ENCODE measurements at regions of chr4 and their contacts with region 1.

Region 1: DNA sequence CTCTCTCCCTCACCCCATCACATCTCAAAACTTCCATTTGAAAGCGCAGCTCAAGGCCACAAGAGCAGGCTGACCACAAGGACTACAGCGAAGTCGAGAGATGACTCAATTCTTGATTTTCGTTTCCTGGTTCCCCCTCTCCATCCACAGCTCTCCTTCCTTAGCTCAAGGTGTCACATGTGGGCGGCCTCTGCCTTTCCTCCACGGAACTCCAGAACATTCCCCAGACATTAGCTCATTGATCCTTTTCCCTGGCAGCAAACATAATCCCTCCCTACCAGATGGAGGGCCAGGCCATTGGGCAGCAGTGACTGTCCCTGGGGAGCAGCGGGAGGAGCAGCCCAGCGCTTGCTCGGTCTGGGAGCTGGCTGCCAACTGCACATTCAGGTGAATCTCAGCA is 56.3 kb downstream of the CCDC149 start:
- DNase-seq: no peak
- H3K4me3 ChIP-seq: no peak overlapping the region
- H3K27ac ChIP-seq: no peak overlapping the region
- H3K4me1 ChIP-seq: no peaks in the 10 kb centered on the region
- H3K27me3 ChIP-seq: no peaks in the 10 kb centered on the region
- CTCF ChIP-seq: no peak
- POLR2A ChIP-seq: no peak

Region 2: DNA sequence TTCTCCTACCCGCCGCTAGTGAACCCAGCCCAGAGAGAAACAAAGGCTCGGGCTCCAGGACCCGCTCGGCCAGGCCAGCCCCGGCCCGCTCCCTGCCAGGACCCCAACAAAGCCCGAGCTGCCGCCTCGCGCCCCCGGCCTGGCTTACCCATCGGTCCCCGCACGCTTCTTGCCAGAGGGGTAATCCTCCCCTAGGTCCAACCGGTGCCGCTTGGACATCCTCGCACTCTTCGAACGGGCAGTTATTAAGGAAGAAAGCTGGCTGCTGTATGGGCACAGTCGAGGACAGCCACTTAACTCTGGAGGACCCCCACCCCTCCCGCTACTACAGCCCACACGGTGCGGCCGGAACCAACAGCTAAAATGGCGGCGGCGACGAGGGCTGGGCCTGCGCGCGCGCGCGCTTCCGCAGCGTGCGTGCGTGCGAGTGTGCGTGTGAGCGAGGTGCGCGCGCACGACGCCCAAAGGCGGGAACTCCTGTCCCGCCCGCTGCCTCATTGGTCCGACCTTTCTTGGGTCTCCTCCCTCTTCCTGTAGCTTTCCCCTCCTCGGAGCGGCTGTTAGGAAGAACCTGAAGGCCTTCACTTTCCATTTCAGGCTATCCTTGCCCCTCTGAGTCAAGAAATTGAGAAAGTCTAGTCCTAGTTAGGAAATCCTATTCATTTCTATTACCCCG is 272.3 kb before region 1 on chr4 and contains the start of gene DHX15:
- intact Hi-C with region 1: loop called (anchors 5 kb)
- DNase-seq: peak; percentile 96
- H3K4me3 ChIP-seq: peak within 1 kb of the TSS; percentile 98 to 99
- H3K27ac ChIP-seq: peak within 1 kb of the TSS; percentile 96 to 97
- H3K4me1 ChIP-seq: no peaks in the 10 kb centered on the region
- H3K27me3 ChIP-seq: no peaks in the 10 kb centered on the region
- CTCF ChIP-seq: peak in 1 of 4 experiments; percentile 9
- POLR2A ChIP-seq: peak; percentile 69
- total RNA-seq, gene DHX15: 86.1 to 109 TPM